ENCODE measurements at regions of chr2 and their contacts with region 1.

Region 1: DNA sequence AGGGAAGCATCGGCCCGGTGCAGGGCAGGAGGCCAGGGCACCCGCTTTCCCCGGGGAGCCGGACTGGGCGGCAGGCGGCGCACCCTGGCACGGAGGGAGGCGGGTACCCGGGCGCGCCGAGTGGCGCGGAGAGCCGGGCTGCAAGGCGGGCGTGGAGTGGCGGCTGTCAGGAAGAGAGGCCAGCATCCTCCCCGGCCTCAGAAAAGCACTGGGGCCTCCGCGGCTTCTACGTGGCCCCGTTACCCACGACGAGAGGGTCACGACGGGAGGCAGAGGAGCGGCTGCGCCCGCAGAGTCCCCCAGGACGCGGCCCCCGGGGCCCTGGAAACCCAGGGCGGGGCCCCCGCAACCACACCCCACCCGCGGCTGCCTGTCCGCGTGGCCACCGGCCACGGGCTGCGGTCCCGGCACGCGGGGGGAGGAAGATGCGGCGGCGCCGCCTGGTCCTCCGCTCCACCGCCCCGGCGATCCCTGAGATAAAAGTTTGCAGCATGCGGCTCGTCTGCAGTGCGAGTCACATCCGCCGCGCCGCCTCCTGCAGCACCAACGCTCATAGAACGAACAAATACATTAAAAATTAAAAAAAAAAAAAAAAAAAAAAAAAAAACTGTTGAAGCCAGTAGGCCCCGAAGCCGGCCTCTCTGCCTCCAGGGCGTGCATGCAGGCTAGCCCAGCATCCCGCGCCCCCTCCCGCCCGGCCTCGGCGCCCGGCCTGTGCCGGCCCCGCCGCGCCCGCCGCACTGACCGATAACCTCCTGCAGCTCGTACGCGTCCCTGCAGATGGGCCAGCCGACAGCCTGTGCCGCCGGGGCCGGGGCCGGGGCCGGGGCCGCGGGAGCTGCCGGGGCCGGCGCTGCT is 683 bp downstream of the STK39 start:
- DNase-seq: peak; percentile 51
- H3K4me3 ChIP-seq: peak overlapping the region; percentile 66 to 92 (median 78)
- H3K27ac ChIP-seq: peak overlapping the region; percentile 45
- H3K4me1 ChIP-seq: peaks cover 28% of the 10 kb centered on the region
- H3K27me3 ChIP-seq: no peaks in the 10 kb centered on the region
- CTCF ChIP-seq: peak; percentile 10 to 67

Region 2: GRCh38 chr2:168160897-168161296 is 85.8 kb before region 1 on chr2:
- CTCF ChIA-PET with region 1: no interaction called
- dilution Hi-C with region 1: no loop called
- in situ Hi-C with region 1: loop called in 1 of 2 experiments (anchors 5 kb)
- intact Hi-C with region 1: loop called (anchors 2 kb)
- DNase-seq: no peak
- H3K4me3 ChIP-seq: no peak overlapping the region
- H3K27ac ChIP-seq: no peak overlapping the region
- H3K4me1 ChIP-seq: peaks cover 11% of the 10 kb centered on the region
- H3K27me3 ChIP-seq: no peaks in the 10 kb centered on the region
- CTCF ChIP-seq: peak; percentile 29 to 45

Region 3: GRCh38 chr2:168184681-168185513 is 61.8 kb before region 1 on chr2:
- CTCF ChIA-PET with region 1: interaction called, 34 read pairs
- dilution Hi-C with region 1: no loop called
- in situ Hi-C with region 1: no loop called
- intact Hi-C with region 1: loop called (anchors 5 kb)
- DNase-seq: peak; percentile 29
- H3K4me3 ChIP-seq: no peak overlapping the region
- H3K27ac ChIP-seq: no peak overlapping the region
- H3K4me1 ChIP-seq: peaks cover 53% of the 10 kb centered on the region
- H3K27me3 ChIP-seq: no peaks in the 10 kb centered on the region
- CTCF ChIP-seq: no peak

Region 4: GRCh38 chr2:168210895-168211570 is 35.7 kb before region 1 on chr2:
- CTCF ChIA-PET with region 1: no interaction called
- dilution Hi-C with region 1: no loop called
- in situ Hi-C with region 1: no loop called
- intact Hi-C with region 1: loop called (anchors 1 kb)
- DNase-seq: peak; percentile 95
- H3K4me3 ChIP-seq: peak overlapping the region; percentile 2 to 52 (median 49)
- H3K27ac ChIP-seq: peak overlapping the region; percentile 76
- H3K4me1 ChIP-seq: peaks cover 42% of the 10 kb centered on the region
- H3K27me3 ChIP-seq: no peaks in the 10 kb centered on the region
- CTCF ChIP-seq: no peak

Region 5: DNA sequence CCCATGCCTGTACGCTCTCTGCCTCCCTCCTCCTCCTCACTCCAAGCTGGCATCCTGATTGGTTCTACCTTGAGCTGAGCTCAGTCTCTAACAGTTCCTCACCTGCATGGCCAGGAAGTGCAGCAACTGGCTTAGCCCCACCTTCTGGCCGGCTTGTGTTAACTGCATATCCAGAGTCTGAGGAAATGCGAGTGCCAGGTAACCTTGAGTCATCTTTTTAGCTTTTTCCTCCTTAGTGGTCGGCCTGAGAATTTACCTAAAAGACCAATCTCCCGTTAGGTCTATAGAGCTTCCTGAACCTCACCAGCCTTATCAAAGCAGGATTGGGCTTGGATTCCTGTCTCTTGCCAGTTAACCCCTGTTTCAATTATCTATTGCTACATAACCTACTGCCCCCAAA is 90.2 kb after region 1 on chr2:
- CTCF ChIA-PET with region 1: interaction called, 4 read pairs
- dilution Hi-C with region 1: no loop called
- in situ Hi-C with region 1: no loop called
- intact Hi-C with region 1: loop called (anchors 1 kb)
- DNase-seq: peak; percentile 83
- H3K4me3 ChIP-seq: no peak overlapping the region
- H3K27ac ChIP-seq: no peak overlapping the region
- H3K4me1 ChIP-seq: peaks cover 4% of the 10 kb centered on the region
- H3K27me3 ChIP-seq: no peaks in the 10 kb centered on the region
- CTCF ChIP-seq: peak; percentile 82 to 94

Region 6: GRCh38 chr2:168404764-168405163 is 158.1 kb after region 1 on chr2:
- CTCF ChIA-PET with region 1: no interaction called
- dilution Hi-C with region 1: no loop called
- in situ Hi-C with region 1: no loop called
- intact Hi-C with region 1: no loop called
- DNase-seq: no peak
- H3K4me3 ChIP-seq: no peak overlapping the region
- H3K27ac ChIP-seq: no peak overlapping the region
- H3K4me1 ChIP-seq: no peaks in the 10 kb centered on the region
- H3K27me3 ChIP-seq: no peaks in the 10 kb centered on the region
- CTCF ChIP-seq: no peak

Measured in mammary epithelial cell (primary cell).